ENCODE measurements at regions of chr6 and their contacts with region 1.

Region 1: GRCh38 chr6:127539272-127539671 is 20.1 kb upstream of the MTCL3 start:
- DNase-seq: no peak
- H3K4me3 ChIP-seq: no peak overlapping the region
- H3K27ac ChIP-seq: no peak overlapping the region
- H3K4me1 ChIP-seq: no peaks in the 10 kb centered on the region
- H3K27me3 ChIP-seq: no peaks in the 10 kb centered on the region
- CTCF ChIP-seq: peak in 2 of 3 experiments; percentile 21 to 48
- POLR2A ChIP-seq: no peak

Region 2: GRCh38 chr6:127302728-127303660 is 236.3 kb before region 1 on chr6:
- intact Hi-C with region 1: loop called (anchors 10 kb)
- DNase-seq: no peak
- H3K4me3 ChIP-seq: no peak overlapping the region
- H3K27ac ChIP-seq: no peak overlapping the region
- H3K4me1 ChIP-seq: peaks cover 20% of the 10 kb centered on the region
- H3K27me3 ChIP-seq: no peaks in the 10 kb centered on the region
- CTCF ChIP-seq: peak; percentile 33 to 61 (median 60)
- POLR2A ChIP-seq: no peak

Region 3: GRCh38 chr6:127436578-127437110 is 102.6 kb before region 1 on chr6:
- intact Hi-C with region 1: no loop called
- DNase-seq: no peak
- H3K4me3 ChIP-seq: no peak overlapping the region
- H3K27ac ChIP-seq: no peak overlapping the region
- H3K4me1 ChIP-seq: no peaks in the 10 kb centered on the region
- H3K27me3 ChIP-seq: no peaks in the 10 kb centered on the region
- CTCF ChIP-seq: no peak
- POLR2A ChIP-seq: no peak

Region 4: DNA sequence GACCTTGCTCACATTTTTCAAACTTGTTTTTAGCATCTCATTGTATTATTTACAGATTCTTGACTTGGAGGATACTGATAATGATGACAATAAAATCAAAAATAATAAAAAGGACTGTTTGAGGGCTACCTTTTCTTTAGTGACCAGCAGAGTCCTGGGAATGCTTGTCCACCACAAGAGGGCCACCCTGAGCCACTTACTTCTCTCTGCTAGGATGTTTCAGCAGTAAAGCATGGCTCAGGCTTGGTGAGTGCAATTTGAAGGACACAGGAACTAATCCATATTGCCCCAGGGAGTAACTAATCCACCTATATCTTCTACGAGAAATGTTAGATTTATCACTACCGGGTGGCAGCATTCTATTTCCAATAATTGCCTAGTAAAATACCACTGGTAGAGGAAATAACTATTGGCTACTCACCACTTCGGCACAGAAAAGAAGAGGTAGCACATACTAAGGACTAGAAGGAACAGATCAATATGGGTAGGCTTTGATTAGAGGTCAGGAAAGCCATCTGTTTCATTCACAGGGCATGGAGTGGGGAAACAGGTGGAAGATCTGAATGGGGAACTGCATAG is 74.3 kb before region 1 on chr6:
- intact Hi-C with region 1: loop called (anchors 10 kb)
- DNase-seq: no peak
- H3K4me3 ChIP-seq: no peak overlapping the region
- H3K27ac ChIP-seq: peak overlapping the region; percentile 51
- H3K4me1 ChIP-seq: peaks cover 20% of the 10 kb centered on the region
- H3K27me3 ChIP-seq: no peaks in the 10 kb centered on the region
- CTCF ChIP-seq: peak; percentile 9 to 68 (median 55)
- POLR2A ChIP-seq: no peak

Measured in vagina (tissue), 2 donors.